ENCODE measurements at regions of chr7 and their contacts with region 1.

Region 1: DNA sequence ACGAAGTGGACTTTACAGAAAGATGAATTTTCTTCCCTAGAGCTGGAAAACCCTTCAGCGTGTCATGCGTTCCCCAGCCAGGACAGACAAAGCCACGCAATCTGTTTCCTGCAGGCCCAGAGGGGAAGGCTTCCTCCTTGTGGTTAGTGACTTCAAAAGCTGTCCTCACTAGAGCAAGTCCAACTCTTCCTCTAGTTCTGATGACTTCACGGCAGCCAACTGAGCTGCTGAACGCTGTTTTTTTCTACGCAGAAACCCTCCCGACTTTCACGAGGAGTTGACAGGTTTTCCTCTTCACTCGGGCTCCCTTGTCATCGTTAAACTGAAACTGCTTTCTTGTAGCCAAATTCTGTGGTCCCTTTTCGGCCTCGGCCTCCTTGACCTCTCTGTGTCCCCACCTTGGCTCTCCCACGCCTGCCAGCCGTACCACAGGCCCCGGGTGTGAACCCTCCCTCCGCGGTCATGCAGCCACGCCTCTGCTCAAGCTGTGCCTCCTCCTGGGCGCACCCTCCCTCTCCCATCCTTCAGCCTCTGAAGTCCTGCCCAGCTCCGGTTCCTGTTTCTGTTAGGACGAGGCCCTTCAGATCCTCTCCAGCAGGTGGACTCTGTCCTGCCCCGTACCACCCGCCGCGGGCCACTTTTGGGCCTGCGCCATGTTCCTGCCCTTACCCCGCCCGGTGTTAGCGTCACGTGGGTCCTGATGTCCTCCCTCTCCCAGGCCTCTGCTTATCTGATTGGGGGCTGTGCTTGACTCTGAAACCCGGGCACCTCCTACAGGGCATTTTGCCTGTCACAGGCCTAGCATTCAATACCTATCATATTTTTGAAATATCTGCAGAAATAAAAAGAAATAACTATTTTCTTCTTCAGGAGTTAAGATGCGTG is 39.3 kb downstream of the CUX1 start:
- DNase-seq: peak; percentile 98 to 100 (median 99)
- H3K4me3 ChIP-seq: peak overlapping the region; percentile 13 to 78 (median 62)
- H3K27ac ChIP-seq: peak overlapping the region; percentile 86 to 93
- H3K4me1 ChIP-seq: peaks cover 23 to 74% (median 68%) of the 10 kb centered on the region in 4 experiments
- H3K27me3 ChIP-seq: no peaks in the 10 kb centered on the region

Region 2: DNA sequence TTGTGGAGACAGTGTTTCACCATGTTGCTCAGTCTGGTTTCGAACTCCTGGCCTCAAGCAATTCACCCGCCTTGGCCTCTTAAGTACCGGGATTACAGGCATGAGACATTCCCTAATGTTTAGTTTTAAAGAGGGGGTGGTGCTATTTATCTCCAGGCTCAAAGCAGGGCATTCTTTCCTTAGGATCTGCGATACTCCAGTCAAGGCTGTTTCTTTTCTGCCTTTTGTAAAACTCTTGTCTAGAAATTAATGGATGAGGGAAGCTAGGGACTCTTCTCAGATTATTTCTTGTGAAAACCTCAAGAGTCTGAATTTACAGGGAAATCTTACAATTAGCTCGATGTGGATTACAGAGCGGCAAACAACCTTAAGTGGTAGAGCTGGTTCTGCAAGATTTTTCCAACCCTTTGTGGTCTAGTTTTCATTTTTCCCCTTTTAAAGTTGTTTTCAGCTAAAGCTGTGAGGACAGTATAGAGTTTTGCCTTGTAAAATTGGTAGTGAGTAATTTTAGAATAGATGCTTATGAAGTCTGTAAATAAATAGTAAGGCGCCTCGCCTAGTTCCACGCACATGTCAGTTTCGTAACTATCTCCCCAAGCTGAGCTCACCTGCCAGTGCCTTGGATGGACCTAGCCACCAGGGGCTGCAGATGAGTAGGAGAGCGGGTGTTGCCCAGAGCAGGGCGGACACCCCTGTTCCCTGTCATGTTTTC is 13.8 kb after region 1 on chr7:
- CTCF ChIA-PET with region 1: interaction called, 19 read pairs
- POLR2A ChIA-PET with region 1: no interaction called
- DNase-seq: no peak
- H3K4me3 ChIP-seq: no peak overlapping the region
- H3K27ac ChIP-seq: peak overlapping the region; percentile 7 to 29
- H3K4me1 ChIP-seq: peaks cover 0 to 27% (median 5%) of the 10 kb centered on the region in 4 experiments
- H3K27me3 ChIP-seq: no peaks in the 10 kb centered on the region

Region 3: DNA sequence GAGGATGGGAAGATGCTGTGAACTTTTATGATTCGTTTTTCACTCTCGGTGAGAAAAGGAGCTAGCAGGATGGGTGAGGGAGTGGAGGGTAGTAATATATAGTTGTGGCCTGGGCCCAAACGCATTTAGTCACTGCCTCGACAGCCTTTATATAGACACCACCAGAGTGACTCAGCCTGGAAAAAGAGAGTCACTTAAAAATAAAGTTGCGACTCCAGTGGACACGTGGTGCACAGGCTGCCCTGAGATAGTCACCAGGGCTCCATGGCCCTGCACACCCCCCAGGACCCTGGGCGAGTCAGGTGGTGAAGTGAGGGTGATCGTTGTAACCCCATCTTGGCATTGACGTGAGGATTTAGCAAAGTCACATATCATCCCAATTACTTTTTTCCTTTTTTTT is 67.5 kb after region 1 on chr7:
- CTCF ChIA-PET with region 1: no interaction called
- POLR2A ChIA-PET with region 1: no interaction called
- DNase-seq: peak in 2 of 3 donors; percentile 24 to 41
- H3K4me3 ChIP-seq: no peak overlapping the region
- H3K27ac ChIP-seq: peak overlapping the region in 1 of 2 experiments; percentile 58
- H3K4me1 ChIP-seq: peaks cover 0 to 9% (median 5%) of the 10 kb centered on the region in 4 experiments
- H3K27me3 ChIP-seq: no peaks in the 10 kb centered on the region

Region 4: DNA sequence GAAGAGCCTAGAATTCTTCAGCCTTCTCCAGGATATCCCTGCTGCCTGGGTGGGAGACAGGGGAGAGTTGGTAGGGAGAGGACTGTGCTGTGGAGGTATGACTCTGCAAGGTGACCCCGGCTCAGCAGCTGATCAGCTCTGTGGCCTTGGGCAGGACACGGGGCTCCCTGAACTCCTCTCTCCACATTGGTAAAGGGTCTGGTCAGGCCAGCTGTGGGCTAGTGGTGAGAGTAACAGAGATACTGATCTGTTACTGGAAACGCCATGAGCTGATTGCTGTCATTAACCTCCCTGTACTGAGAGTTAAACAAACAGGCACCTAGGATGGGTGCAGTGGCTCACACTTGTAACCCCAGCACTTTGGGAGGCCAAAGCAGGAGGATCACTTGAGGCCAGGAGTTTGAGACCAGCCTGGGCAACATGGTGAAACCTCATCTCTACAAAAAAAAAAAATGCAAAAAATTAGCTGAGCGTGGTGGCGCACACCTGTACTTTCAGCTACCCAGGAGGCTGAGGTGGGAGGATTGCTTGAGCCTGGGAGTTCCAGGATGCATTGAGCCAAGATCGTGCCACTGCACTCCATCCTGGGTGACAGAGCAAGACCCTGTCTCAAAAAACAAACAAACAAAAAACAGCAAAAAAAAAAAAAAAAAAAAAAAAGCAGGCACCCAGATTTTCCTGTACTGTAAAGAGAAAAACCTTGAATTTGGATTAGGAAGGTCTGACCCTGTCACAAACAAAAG is 112.2 kb after region 1 on chr7:
- CTCF ChIA-PET with region 1: no interaction called
- POLR2A ChIA-PET with region 1: no interaction called
- DNase-seq: no peak
- H3K4me3 ChIP-seq: no peak overlapping the region
- H3K27ac ChIP-seq: no peak overlapping the region
- H3K4me1 ChIP-seq: peaks cover 0 to 21% (median 5%) of the 10 kb centered on the region in 4 experiments
- H3K27me3 ChIP-seq: no peaks in the 10 kb centered on the region

Region 5: DNA sequence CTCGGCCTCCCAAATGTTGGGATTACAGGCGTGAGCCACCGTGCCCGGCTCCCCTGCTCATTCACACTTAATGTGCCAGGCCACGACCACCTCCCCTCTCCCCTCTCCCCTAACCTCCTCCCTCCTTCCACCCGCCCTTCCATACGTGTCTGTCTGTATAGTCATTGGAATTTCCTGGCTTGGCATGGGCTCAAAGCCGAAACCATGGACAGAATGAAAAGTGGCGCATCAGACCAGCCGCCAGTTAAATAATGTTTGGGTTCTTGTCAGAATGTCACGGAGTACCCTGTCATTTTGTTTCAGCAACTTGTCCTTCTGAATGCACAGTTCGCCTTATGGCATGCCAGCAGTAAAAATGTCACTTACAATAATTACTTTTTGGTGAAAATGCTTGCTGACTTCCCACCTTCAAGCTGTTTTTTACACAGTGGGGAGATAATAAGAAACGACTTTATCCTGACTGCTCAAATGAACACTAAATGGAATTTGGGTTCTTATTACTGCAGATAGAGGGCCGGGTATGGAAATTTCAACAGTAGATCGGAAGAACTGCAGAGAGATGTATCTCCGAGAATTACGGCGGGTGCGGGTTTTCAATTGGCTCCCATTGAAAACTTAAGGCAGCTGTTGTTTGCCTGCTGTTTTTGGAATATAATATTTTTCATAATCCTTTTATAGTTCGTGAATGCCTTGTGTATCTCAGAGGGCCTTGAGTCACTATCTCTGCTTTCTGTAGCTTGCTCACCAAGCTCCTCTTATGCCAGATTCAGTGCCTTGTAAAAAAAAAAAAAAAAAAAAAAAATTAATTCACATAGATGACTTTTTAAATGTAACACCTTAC is 364.5 kb after region 1 on chr7:
- CTCF ChIA-PET with region 1: no interaction called
- POLR2A ChIA-PET with region 1: no interaction called
- DNase-seq: no peak
- H3K4me3 ChIP-seq: no peak overlapping the region
- H3K27ac ChIP-seq: no peak overlapping the region
- H3K4me1 ChIP-seq: peaks cover 0 to 10% (median 3%) of the 10 kb centered on the region in 4 experiments
- H3K27me3 ChIP-seq: no peaks in the 10 kb centered on the region